ENCODE measurements at regions of chr12 and their contacts with region 1.

Region 1: GRCh38 chr12:49188914-49189367 is at the start of gene TUBA1A:
- DNase-seq: peak; percentile 97
- H3K4me3 Mint-ChIP-seq: peak within 1 kb of the TSS; percentile 90
- H3K27ac Mint-ChIP-seq: peak within 1 kb of the TSS; percentile 95
- H3K4me1 Mint-ChIP-seq: peaks cover 16% of the 10 kb centered on the region
- H3K27me3 Mint-ChIP-seq: no peaks in the 10 kb centered on the region
- total RNA-seq, gene TUBA1A: 86.4 to 88.7 TPM

Region 2: DNA sequence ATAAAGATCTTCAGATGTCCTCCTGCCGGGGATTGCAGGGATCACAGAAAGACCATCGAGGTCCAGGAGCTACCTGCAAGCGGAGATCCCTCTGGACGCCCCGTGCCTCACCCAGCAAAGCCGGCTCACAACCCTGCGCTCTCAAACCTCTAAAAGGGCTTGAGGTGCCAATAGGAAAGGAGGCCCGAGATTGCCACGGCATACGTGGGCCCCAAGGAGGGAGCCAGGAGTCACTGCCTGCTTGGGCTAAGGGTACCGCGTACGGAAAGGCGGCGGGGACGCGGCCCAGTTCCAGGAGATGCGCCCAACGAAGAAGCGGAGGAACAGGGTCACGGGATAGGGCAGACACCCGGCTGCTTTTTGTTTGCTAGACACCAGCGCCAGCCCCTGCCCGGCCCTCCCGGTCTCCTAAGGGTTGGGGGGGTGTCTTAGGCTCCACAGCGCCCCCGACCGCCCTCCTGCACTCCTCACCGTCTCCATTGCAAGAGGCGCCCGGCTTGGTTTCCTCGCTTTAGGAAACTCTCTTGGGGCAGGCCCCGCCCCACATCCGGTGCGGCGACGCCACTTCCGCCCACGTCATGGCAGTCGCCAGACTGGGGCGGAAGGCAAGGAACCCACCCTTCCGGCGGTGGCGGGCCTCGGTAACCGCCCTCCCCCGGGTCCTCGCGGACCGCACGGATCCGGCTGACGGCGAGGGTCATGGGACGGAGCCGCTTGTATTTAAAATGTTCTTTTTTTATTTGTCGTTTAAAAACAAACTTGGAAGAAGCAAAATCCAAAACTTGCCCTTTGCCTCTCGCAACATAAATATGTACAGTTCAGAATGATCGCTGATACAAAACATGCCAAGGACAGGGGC is 170.5 kb before region 1 on chr12 and contains the start of gene PRKAG1:
- CTCF ChIA-PET with region 1: no interaction called
- POLR2A ChIA-PET with region 1: no interaction called
- intact Hi-C with region 1: loop called (anchors 2 kb)
- DNase-seq: peak; percentile 97
- H3K4me3 Mint-ChIP-seq: peak within 1 kb of the TSS; percentile 95
- H3K27ac Mint-ChIP-seq: peak within 1 kb of the TSS; percentile 92
- H3K4me1 Mint-ChIP-seq: peaks cover 40% of the 10 kb centered on the region
- H3K27me3 Mint-ChIP-seq: no peaks in the 10 kb centered on the region
- total RNA-seq, gene PRKAG1: 52.0 to 55.8 TPM

Region 3: GRCh38 chr12:49110464-49111155 is 78.3 kb before region 1 on chr12 and contains the start of gene LMBR1L:
- CTCF ChIA-PET with region 1: interaction called, 6 read pairs
- POLR2A ChIA-PET with region 1: interaction called, 8 read pairs
- intact Hi-C with region 1: loop called (anchors 1 kb)
- DNase-seq: peak; percentile 97
- H3K4me3 Mint-ChIP-seq: peak within 1 kb of the TSS; percentile 95
- H3K27ac Mint-ChIP-seq: peak within 1 kb of the TSS; percentile 80
- H3K4me1 Mint-ChIP-seq: peaks cover 24% of the 10 kb centered on the region
- H3K27me3 Mint-ChIP-seq: no peaks in the 10 kb centered on the region
- total RNA-seq, gene LMBR1L: 55.0 to 59.1 TPM

Region 4: GRCh38 chr12:49121047-49121696 is 67.8 kb before region 1 on chr12:
- CTCF ChIA-PET with region 1: no interaction called
- POLR2A ChIA-PET with region 1: no interaction called
- intact Hi-C with region 1: no loop called
- DNase-seq: no peak
- H3K4me3 Mint-ChIP-seq: no peak overlapping the region
- H3K27ac Mint-ChIP-seq: no peak overlapping the region
- H3K4me1 Mint-ChIP-seq: no peaks in the 10 kb centered on the region
- H3K27me3 Mint-ChIP-seq: no peaks in the 10 kb centered on the region

Region 5: GRCh38 chr12:49200919-49201594 is 12.1 kb after region 1 on chr12:
- CTCF ChIA-PET with region 1: interaction called, 9 read pairs
- POLR2A ChIA-PET with region 1: interaction called, 6 read pairs
- intact Hi-C with region 1: loop called (anchors 1 kb)
- DNase-seq: no peak
- H3K4me3 Mint-ChIP-seq: no peak overlapping the region
- H3K27ac Mint-ChIP-seq: no peak overlapping the region
- H3K4me1 Mint-ChIP-seq: peaks cover 11% of the 10 kb centered on the region
- H3K27me3 Mint-ChIP-seq: peaks cover 3% of the 10 kb centered on the region

Region 6: GRCh38 chr12:49264738-49265515 is 76.0 kb after region 1 on chr12 and contains the start of gene TUBA1C:
- CTCF ChIA-PET with region 1: no interaction called
- POLR2A ChIA-PET with region 1: interaction called, 10 read pairs
- intact Hi-C with region 1: loop called (anchors 1 kb)
- DNase-seq: peak; percentile 93
- H3K4me3 Mint-ChIP-seq: peak within 1 kb of the TSS; percentile 99
- H3K27ac Mint-ChIP-seq: peak within 1 kb of the TSS; percentile 99
- H3K4me1 Mint-ChIP-seq: peaks cover 47% of the 10 kb centered on the region
- H3K27me3 Mint-ChIP-seq: no peaks in the 10 kb centered on the region
- total RNA-seq, gene TUBA1C: 353 to 360 TPM

Region 7: DNA sequence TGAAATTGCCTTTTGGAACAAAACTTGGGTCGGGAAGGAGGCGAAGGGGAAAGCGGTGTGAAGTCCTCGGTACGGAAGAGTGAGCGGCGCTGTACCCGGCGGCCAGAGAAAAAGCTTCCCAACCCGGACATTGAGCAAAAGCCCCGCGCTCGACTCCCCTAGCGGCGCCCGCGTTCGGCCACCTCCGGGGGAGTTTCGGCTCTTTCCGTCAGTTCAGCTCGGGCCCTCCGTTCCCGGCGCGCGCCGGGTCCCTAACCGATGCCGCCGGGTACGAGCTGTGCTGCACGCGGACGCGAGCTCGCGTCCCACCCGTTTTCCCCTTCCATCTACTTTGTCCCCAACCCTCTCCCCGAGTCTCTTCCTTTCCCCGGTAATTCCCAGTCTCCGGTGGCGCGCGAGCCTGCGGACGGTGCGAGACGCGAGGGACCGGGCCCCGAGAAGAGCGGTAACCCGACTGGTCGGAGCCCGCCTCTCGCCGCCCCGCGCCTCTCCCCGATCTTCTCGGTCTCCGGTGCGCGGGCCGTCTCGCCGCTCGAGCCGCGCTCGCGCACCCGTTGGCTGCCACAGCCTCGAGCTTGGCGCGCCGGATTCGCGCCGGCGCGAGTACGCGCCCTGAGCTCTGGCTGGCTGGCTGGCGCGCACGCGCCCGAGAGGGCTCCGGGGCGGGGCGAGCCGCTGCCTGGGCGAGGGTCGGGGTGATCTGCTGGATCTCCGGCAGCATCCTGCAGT is 177.9 kb after region 1 on chr12:
- CTCF ChIA-PET with region 1: no interaction called
- POLR2A ChIA-PET with region 1: interaction called, 3 read pairs
- intact Hi-C with region 1: loop called (anchors 2 kb)
- DNase-seq: peak; percentile 93
- H3K4me3 Mint-ChIP-seq: peak overlapping the region; percentile 95
- H3K27ac Mint-ChIP-seq: peak overlapping the region; percentile 95
- H3K4me1 Mint-ChIP-seq: peaks cover 23% of the 10 kb centered on the region
- H3K27me3 Mint-ChIP-seq: no peaks in the 10 kb centered on the region